Heart right ventricle (tissue), 16 donors: ENCODE measurements at regions of chr13 and their contacts with region 1.

Region 1: DNA sequence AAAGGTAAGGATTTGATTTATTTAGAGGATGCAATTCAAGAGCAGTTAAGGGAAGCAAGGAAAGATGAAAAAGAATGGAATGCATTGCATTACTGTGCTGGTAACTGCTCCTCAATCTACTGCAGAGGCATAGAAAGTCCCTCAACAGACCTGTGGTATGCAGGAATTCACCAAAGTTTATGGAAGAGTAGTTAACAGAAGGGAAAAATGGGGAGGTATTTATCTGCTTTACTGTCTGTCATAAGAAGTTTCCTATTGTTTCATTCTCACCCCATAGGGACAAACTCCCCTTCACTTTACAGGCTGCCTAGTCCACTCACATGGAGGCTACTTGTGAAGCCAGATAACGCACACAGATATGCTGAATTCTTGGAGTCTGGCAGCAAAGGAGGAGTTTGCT is 354.9 kb upstream of the SPRY2 start:
- DNase-seq: no peak
- ATAC-seq: no peak
- H3K4me3 ChIP-seq: no peak overlapping the region
- H3K27ac ChIP-seq: no peak overlapping the region
- H3K4me1 ChIP-seq: no peaks in the 10 kb centered on the region
- H3K27me3 ChIP-seq: no peaks in the 10 kb centered on the region
- CTCF ChIP-seq: no peak

Region 2: DNA sequence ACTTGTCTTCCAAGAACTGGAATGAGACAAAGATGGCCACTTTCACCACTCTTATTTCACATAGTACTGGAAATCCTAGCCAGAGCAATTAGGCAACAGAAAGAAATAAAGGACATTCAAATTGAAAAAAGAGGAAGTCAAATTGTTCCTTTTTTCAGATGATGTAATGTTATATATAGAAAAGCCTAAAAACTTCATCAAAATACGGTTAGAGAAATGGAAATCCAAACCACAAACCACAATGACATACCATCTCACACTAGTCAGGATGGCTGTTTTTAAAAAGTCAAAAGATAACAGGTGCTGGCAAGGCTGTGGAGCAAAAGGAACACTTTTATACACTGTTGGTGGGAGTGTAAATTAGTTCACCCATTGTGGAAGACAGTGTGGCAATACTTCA is 241.6 kb before region 1 on chr13:
- intact Hi-C with region 1: no loop called
- DNase-seq: no peak
- ATAC-seq: peak in 1 of 8 donors; percentile 29
- H3K4me3 ChIP-seq: no peak overlapping the region
- H3K27ac ChIP-seq: no peak overlapping the region
- H3K4me1 ChIP-seq: peaks cover 0 to 42% (median 14%) of the 10 kb centered on the region in 9 donors
- H3K27me3 ChIP-seq: peaks cover 0 to 18% (median 0%) of the 10 kb centered on the region in 7 donors
- CTCF ChIP-seq: no peak

Region 3: DNA sequence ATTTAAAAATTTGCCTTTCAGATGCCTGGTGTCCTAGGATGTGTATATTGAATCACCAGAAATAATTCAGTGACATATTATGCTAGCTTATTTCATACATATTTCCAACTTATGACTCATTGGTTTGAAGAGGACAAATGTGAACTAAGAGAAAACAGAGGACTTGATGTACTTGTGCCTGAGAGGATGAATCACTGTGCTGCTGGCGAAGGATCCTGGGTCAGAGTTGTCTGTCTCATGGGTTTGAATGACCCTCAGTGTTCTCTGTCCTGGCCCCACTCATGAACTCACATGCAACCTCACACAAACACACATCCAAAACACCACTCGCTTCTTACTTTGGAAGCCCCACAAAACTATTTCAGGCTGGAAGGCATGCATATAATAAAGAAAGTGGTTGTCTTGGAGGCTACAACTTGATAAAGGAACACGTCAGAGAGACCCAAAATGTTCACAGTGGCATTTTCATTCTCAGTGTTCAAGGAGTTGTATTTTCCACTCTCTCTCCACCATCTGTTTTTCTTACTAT is 225.9 kb before region 1 on chr13:
- intact Hi-C with region 1: no loop called
- DNase-seq: peak; percentile 50 to 73
- ATAC-seq: peak; percentile 94 to 99 (median 98)
- H3K4me3 ChIP-seq: peak overlapping the region in 1 of 10 donors; percentile 10
- H3K27ac ChIP-seq: peak overlapping the region; percentile 67 to 90 (median 83)
- H3K4me1 ChIP-seq: peaks cover 0 to 40% (median 32%) of the 10 kb centered on the region in 9 donors
- H3K27me3 ChIP-seq: no peaks in the 10 kb centered on the region
- CTCF ChIP-seq: no peak

Region 4: DNA sequence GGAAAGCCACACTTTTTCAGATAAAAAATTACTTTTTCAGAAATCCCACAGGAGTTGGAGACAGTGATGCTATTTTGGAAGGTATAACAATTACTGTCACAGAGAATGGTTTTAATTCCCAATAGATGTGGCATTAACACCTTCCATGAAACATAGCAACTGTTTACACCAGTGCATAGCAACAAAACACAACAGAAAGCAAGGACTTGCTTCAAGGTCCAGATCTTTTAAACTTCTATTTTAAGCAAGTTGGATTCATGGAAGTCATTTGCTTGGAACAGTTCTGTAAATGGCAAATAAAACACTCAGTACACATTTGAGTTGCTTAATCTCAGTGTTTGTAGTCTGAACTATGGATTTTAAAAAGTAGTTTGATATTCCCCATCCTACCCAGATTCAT is 31.0 kb after region 1 on chr13:
- intact Hi-C with region 1: no loop called
- DNase-seq: no peak
- ATAC-seq: peak; percentile 73 to 96 (median 91)
- H3K4me3 ChIP-seq: no peak overlapping the region
- H3K27ac ChIP-seq: peak overlapping the region in 9 of 10 donors; percentile 49 to 81 (median 69)
- H3K4me1 ChIP-seq: peaks cover 0 to 19% (median 12%) of the 10 kb centered on the region in 9 donors
- H3K27me3 ChIP-seq: no peaks in the 10 kb centered on the region
- CTCF ChIP-seq: no peak

Region 5: GRCh38 chr13:80755910-80756309 is 60.1 kb after region 1 on chr13:
- intact Hi-C with region 1: loop called in 1 of 10 experiments (anchors 10 kb)
- DNase-seq: no peak
- ATAC-seq: no peak
- H3K4me3 ChIP-seq: no peak overlapping the region
- H3K27ac ChIP-seq: no peak overlapping the region
- H3K4me1 ChIP-seq: peaks cover 0 to 8% (median 0%) of the 10 kb centered on the region in 9 donors
- H3K27me3 ChIP-seq: no peaks in the 10 kb centered on the region
- CTCF ChIP-seq: no peak